Motor neuron (in vitro differentiated cells): ENCODE measurements at regions of chr17 and their contacts with region 1.

Region 1: GRCh38 chr17:3012926-3013581 is 50.4 kb downstream of the OR1D5 start:
- ATAC-seq: peak; percentile 92 to 98 (median 94)
- H3K4me3 ChIP-seq: no peak overlapping the region
- H3K27ac ChIP-seq: no peak overlapping the region
- H3K4me1 ChIP-seq: no peaks in the 10 kb centered on the region

Region 2: DNA sequence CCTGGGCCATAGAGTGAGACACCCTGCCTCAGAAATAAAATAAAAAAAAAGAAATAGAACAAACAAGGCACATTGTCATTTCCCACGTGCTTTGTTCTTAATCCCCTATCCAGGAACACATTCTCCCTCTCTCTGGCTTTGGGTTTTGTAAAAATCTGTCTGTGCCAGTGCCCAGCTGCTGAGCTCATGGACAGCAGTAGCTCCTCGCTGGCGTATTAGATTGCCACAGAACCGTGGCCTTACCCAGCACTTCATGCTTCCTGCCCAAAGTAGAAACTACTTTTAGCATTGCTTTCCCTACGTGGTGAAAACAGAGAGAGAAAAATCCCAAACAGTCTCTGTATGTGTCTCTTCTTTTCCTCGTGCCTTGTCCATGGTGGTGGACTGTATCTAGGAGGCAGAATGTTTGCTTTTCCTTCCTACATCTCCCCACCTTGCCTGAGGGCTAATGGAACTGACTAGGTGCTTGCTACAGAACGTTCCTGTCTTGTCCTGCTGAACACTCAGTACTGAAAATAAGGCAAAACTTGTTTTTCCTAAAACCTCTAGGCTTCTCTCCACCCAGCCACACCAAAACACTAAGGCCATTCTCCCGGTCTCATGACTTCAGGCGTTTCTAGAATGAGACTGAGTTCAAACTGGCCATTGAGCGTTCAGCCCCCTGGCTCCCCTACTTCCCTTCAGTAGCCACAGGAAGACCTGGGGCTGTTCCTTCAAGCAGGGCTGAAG is 638.3 kb before region 1 on chr17:
- in situ Hi-C with region 1: no loop called
- ATAC-seq: no peak
- H3K4me3 ChIP-seq: no peak overlapping the region
- H3K27ac ChIP-seq: no peak overlapping the region
- H3K4me1 ChIP-seq: no peaks in the 10 kb centered on the region

Region 3: DNA sequence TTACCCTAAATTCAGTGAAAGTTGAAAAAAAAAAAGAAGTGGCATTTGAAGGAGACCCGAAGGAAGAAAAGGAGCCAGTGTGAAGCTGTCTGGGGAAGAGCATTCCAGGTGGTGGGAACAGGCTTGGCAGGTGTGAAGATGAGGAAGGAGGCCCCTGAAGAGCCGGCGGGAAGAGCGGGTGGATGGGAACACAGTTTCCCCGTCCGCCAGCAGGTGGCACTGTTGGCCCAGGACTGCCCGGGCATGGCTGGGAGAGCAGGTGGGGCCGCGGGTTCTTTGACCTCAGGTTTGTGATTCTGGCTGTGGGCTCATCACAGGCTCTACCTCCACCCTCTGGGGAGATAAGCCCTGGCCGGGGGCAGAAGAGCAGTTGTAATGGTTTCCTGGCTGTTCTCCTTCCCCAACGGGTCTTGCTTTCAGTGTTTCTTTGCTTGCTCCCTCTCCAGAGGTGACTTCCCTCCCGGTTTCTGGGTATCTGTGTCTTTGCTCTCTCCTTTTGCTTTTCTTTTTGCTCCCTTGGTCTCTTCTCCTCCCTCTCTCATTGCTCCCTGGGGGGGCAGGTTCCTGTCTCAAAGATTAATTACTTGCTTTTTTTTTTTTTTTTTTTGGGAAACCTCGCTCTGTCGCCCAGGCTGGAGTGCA is 184.5 kb before region 1 on chr17:
- in situ Hi-C with region 1: loop called in 4 of 9 experiments (anchors 10 to 25 kb)
- ATAC-seq: peak; percentile 79 to 91 (median 82)
- H3K4me3 ChIP-seq: no peak overlapping the region
- H3K27ac ChIP-seq: no peak overlapping the region
- H3K4me1 ChIP-seq: peaks cover 0 to 2% of the 10 kb centered on the region in 2 donors

Region 4: GRCh38 chr17:2853111-2853721 is 159.8 kb before region 1 on chr17:
- in situ Hi-C with region 1: loop called in 4 of 9 experiments (anchors 10 to 25 kb)
- ATAC-seq: peak; percentile 63 to 75 (median 70)
- H3K4me3 ChIP-seq: peak overlapping the region; percentile 42 to 53 (median 46)
- H3K27ac ChIP-seq: peak overlapping the region in 1 of 2 donors; percentile 26
- H3K4me1 ChIP-seq: peaks cover 0 to 18% of the 10 kb centered on the region in 2 donors